ENCODE measurements at regions of chr1 and their contacts with region 1.

Region 1: GRCh38 chr1:168082008-168082876 is 54.5 kb downstream of the GPR161 start:
- DNase-seq: peak; percentile 17
- ATAC-seq: peak; percentile 95
- H3K4me3 ChIP-seq: no peak overlapping the region
- H3K27ac ChIP-seq: no peak overlapping the region
- H3K4me1 ChIP-seq: no peaks in the 10 kb centered on the region
- H3K27me3 ChIP-seq: no peaks in the 10 kb centered on the region
- CTCF ChIP-seq: peak; percentile 92 to 98 (median 95); a peak in 5 of 6 replicates
- EP300 ChIP-seq: no peak
- POLR2A ChIP-seq: no peak
- RAD21 ChIP-seq: peak; percentile 83

Region 2: GRCh38 chr1:167553136-167554027 is 528.9 kb before region 1 on chr1 and contains the start of gene CREG1:
- CTCF ChIA-PET with region 1: no interaction called
- POLR2A ChIA-PET with region 1: no interaction called
- RAD21 ChIA-PET with region 1: no interaction called
- SMC1A ChIA-PET with region 1: no interaction called
- in situ Hi-C with region 1: no loop called
- intact Hi-C with region 1: no loop called
- DNase-seq: no peak
- ATAC-seq: peak; percentile 97
- H3K4me3 ChIP-seq: peak within 1 kb of the TSS; percentile 72
- H3K27ac ChIP-seq: peak within 1 kb of the TSS; percentile 51
- H3K4me1 ChIP-seq: peaks cover 9% of the 10 kb centered on the region
- H3K27me3 ChIP-seq: no peaks in the 10 kb centered on the region
- CTCF ChIP-seq: no peak
- EP300 ChIP-seq: no peak
- POLR2A ChIP-seq: peak; percentile 93
- RAD21 ChIP-seq: no peak
- polyA plus RNA-seq, gene CREG1: 5.3 to 11.3 TPM

Region 3: DNA sequence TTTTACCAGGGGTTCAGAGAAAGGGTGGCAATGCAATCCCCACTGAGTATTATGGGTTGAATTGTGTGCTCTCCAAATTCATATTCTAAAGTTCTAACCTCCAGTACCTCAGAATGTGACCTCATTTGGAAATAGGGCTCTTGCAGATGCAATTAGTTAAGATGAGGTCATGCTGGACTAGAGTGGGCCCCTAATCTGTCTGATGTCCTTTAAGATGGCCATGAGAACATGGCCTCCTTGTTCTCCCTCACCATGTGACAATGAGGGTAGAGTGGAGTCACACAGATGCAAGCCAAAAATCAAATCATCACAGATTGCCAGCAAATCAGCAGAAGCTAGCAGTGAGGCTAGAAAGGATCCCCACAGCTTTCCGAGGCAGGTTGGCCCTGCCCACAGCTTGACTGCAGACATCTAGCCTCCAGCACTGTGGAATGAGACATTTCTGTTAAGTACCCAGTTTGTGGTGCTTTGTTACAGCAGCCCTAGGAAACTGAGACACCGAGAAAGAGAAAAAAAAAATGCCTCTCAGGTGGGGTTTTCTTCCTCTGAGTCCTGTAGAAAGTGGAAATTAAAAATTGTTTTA is 503.2 kb before region 1 on chr1:
- CTCF ChIA-PET with region 1: no interaction called
- POLR2A ChIA-PET with region 1: no interaction called
- RAD21 ChIA-PET with region 1: no interaction called
- SMC1A ChIA-PET with region 1: no interaction called
- in situ Hi-C with region 1: no loop called
- intact Hi-C with region 1: no loop called
- DNase-seq: no peak
- ATAC-seq: no peak
- H3K4me3 ChIP-seq: no peak overlapping the region
- H3K27ac ChIP-seq: no peak overlapping the region
- H3K4me1 ChIP-seq: no peaks in the 10 kb centered on the region
- H3K27me3 ChIP-seq: 0 out of 4 replicates have a peak, but pooled peaks cover 0 to 1% of the 10 kb centered on the region in 2 experiments
- CTCF ChIP-seq: no peak
- EP300 ChIP-seq: no peak
- POLR2A ChIP-seq: no peak
- RAD21 ChIP-seq: no peak

Region 4: GRCh38 chr1:167715157-167715999 is 366.9 kb before region 1 on chr1:
- CTCF ChIA-PET with region 1: interaction called, 8 read pairs
- POLR2A ChIA-PET with region 1: no interaction called
- RAD21 ChIA-PET with region 1: interaction called, 5 read pairs
- SMC1A ChIA-PET with region 1: interaction called, 6 read pairs
- in situ Hi-C with region 1: no loop called
- intact Hi-C with region 1: loop called (anchors 5 kb)
- DNase-seq: peak; percentile 97
- ATAC-seq: peak; percentile 40
- H3K4me3 ChIP-seq: peak overlapping the region; percentile 95
- H3K27ac ChIP-seq: peak overlapping the region; percentile 98
- H3K4me1 ChIP-seq: peaks cover 24% of the 10 kb centered on the region
- H3K27me3 ChIP-seq: no peaks in the 10 kb centered on the region
- CTCF ChIP-seq: peak; percentile 72 to 99 (median 80)
- EP300 ChIP-seq: 0 out of 4 replicates have a peak, but pooled peaks of 1 of the 2 experiments have one; percentile 60
- POLR2A ChIP-seq: no peak
- RAD21 ChIP-seq: peak; percentile 43; the same call in 1 of the 2 replicates

Region 5: DNA sequence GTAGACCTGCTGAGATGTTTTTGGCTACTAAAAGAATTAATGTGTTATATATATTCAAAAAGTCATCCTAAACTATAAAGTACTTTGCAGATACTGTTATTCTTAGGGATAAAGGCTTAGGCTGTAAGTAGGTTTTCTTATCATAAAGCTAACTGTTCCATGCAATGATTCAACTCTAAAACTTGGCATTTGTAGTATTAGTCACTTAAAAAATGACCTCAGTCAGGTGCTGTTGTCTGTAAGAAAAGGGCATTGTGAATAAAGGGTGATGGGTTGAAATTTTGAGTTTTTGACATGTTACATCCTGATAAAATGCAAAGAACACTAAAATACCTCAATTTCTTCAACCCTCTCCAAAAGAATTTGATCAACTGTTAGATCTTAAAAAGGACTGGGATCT is 201.2 kb before region 1 on chr1:
- CTCF ChIA-PET with region 1: interaction called, 10 read pairs
- POLR2A ChIA-PET with region 1: no interaction called
- RAD21 ChIA-PET with region 1: interaction called, 5 read pairs
- SMC1A ChIA-PET with region 1: no interaction called
- in situ Hi-C with region 1: no loop called
- intact Hi-C with region 1: no loop called
- DNase-seq: no peak
- ATAC-seq: no peak
- H3K4me3 ChIP-seq: no peak overlapping the region
- H3K27ac ChIP-seq: no peak overlapping the region
- H3K4me1 ChIP-seq: no peaks in the 10 kb centered on the region
- H3K27me3 ChIP-seq: no peaks in the 10 kb centered on the region
- CTCF ChIP-seq: no peak
- EP300 ChIP-seq: no peak
- POLR2A ChIP-seq: no peak
- RAD21 ChIP-seq: no peak

Region 6: GRCh38 chr1:167936068-167936929 is 145.9 kb before region 1 on chr1 and contains the start of gene DCAF6:
- CTCF ChIA-PET with region 1: interaction called, 13 read pairs
- POLR2A ChIA-PET with region 1: no interaction called
- RAD21 ChIA-PET with region 1: interaction called, 11 read pairs
- SMC1A ChIA-PET with region 1: interaction called, 6 read pairs
- in situ Hi-C with region 1: no loop called
- intact Hi-C with region 1: no loop called
- DNase-seq: peak; percentile 98
- ATAC-seq: peak; percentile 82
- H3K4me3 ChIP-seq: peak within 1 kb of the TSS; percentile 95
- H3K27ac ChIP-seq: peak within 1 kb of the TSS; percentile 99
- H3K4me1 ChIP-seq: no peaks in the 10 kb centered on the region
- H3K27me3 ChIP-seq: no peaks in the 10 kb centered on the region
- CTCF ChIP-seq: no peak
- EP300 ChIP-seq: no peak
- POLR2A ChIP-seq: peak; percentile 77
- RAD21 ChIP-seq: no peak
- polyA plus RNA-seq, gene DCAF6: 11.4 to 18.3 TPM

Region 7: GRCh38 chr1:168092566-168093355 is 10.5 kb after region 1 on chr1:
- CTCF ChIA-PET with region 1: interaction called, 30 read pairs
- POLR2A ChIA-PET with region 1: no interaction called
- RAD21 ChIA-PET with region 1: interaction called, 3 read pairs
- SMC1A ChIA-PET with region 1: interaction called, 10 read pairs
- in situ Hi-C with region 1: no loop called
- intact Hi-C with region 1: no loop called
- DNase-seq: no peak
- ATAC-seq: peak; percentile 41; the same call in 1 of the 3 replicates
- H3K4me3 ChIP-seq: no peak overlapping the region
- H3K27ac ChIP-seq: no peak overlapping the region
- H3K4me1 ChIP-seq: no peaks in the 10 kb centered on the region
- H3K27me3 ChIP-seq: 0 out of 4 replicates have a peak, but pooled peaks cover 0 to 1% of the 10 kb centered on the region in 2 experiments
- CTCF ChIP-seq: peak in 2 of 3 experiments; percentile 5 to 35; a peak in 2 of 6 replicates
- EP300 ChIP-seq: no peak
- POLR2A ChIP-seq: no peak
- RAD21 ChIP-seq: peak; percentile 23; the same call in 1 of the 2 replicates

Region 8: GRCh38 chr1:168225476-168226190 is 143.4 kb after region 1 on chr1 and contains the start of gene SFT2D2:
- CTCF ChIA-PET with region 1: interaction called, 3 read pairs
- POLR2A ChIA-PET with region 1: interaction called, 3 read pairs
- RAD21 ChIA-PET with region 1: no interaction called
- SMC1A ChIA-PET with region 1: interaction called, 4 read pairs
- in situ Hi-C with region 1: no loop called
- intact Hi-C with region 1: loop called (anchors 5 kb)
- DNase-seq: no peak
- ATAC-seq: peak; percentile 92
- H3K4me3 ChIP-seq: peak within 1 kb of the TSS; percentile 79
- H3K27ac ChIP-seq: peak within 1 kb of the TSS; percentile 85
- H3K4me1 ChIP-seq: peaks cover 28% of the 10 kb centered on the region
- H3K27me3 ChIP-seq: no peaks in the 10 kb centered on the region
- CTCF ChIP-seq: no peak
- EP300 ChIP-seq: no peak
- POLR2A ChIP-seq: peak; percentile 94
- RAD21 ChIP-seq: no peak
- polyA plus RNA-seq, gene SFT2D2: 5.6 to 6.3 TPM

Measured in GM12878 (cell line).